ENCODE measurements at regions of chr3 and their contacts with region 1.

Region 1: DNA sequence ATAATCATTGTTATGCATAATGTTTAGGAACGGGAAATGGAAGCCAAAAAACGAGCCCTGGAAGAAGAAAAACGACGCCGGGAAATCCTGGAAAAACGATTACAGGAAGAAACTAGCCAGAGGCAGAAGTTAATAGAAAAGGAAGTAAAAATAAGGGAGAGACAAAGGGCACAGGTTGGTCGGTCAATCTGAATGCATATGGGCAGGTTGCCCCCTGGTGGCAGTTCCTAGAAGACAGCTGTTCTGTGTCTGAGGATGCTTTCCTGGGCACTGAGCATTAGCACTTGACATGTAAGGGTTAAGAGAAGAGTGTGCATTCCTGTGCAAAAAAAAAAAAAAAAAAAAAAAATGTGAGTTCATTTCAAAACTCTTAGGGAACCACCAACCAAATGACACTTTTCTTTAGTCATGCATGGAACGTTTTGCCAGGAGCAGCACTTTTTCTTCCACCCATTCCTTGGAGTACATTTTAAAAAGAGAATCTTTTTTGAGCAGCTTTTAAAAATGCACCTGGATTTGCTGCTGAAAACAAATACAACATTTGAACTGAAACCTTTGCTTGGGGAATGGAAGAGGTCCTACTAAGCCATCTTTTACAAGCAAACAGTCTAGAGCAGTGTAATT is 11.1 kb upstream of the ABHD10 start:
- DNase-seq: peak; percentile 55 to 85 (median 80)
- ATAC-seq: peak; percentile 95
- H3K4me3 ChIP-seq: no peak overlapping the region
- H3K4me3 Mint-ChIP-seq: no peak overlapping the region
- H3K27ac ChIP-seq: no peak overlapping the region
- H3K27ac Mint-ChIP-seq: no peak overlapping the region
- H3K4me1 ChIP-seq: no peaks in the 10 kb centered on the region
- H3K4me1 Mint-ChIP-seq: peaks cover 3% of the 10 kb centered on the region
- H3K27me3 ChIP-seq: no peaks in the 10 kb centered on the region
- H3K27me3 Mint-ChIP-seq: no peaks in the 10 kb centered on the region
- CTCF ChIP-seq: peak; percentile 92

Region 2: GRCh38 chr3:111577794-111578685 is 389.7 kb before region 1 on chr3:
- CTCF ChIA-PET with region 1: interaction called, 5 read pairs
- POLR2A ChIA-PET with region 1: no interaction called
- intact Hi-C with region 1: loop called in 1 of 2 experiments (anchors 10 kb)
- DNase-seq: peak in 2 of 9 experiments; percentile 51 to 68
- ATAC-seq: peak; percentile 90
- H3K4me3 ChIP-seq: no peak overlapping the region
- H3K4me3 Mint-ChIP-seq: no peak overlapping the region
- H3K27ac ChIP-seq: no peak overlapping the region
- H3K27ac Mint-ChIP-seq: peak overlapping the region; percentile 53
- H3K4me1 ChIP-seq: peaks cover 7% of the 10 kb centered on the region
- H3K4me1 Mint-ChIP-seq: peaks cover 75% of the 10 kb centered on the region
- H3K27me3 ChIP-seq: no peaks in the 10 kb centered on the region
- H3K27me3 Mint-ChIP-seq: no peaks in the 10 kb centered on the region
- CTCF ChIP-seq: no peak

Region 3: DNA sequence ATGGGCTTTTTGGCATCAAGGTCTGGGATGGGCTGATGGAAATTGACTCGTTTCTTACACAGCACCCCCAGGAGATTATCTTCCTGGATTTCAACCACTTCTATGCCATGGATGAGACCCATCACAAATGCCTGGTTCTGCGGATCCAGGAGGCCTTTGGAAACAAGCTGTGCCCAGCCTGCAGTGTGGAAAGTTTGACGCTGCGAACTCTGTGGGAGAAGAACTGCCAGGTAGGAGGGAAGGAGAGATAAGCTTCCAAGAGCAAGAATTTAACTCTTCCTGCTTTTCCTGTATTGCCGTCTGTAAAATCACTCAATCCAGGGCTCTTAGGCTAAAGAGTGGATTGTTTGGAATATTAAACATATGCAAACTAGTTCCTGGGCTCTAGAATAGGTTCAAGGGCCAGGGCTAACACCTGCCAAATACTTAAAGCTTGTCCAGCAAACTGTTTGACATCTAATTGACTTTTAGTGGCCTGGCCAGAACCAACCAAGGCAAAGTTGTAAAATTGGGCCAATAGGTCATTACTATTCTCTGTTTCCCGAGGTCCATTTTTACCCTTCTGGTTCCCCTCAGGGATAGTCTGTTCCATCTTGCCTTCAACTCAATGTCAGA is 259.5 kb before region 1 on chr3:
- CTCF ChIA-PET with region 1: interaction called, 13 read pairs
- POLR2A ChIA-PET with region 1: no interaction called
- intact Hi-C with region 1: no loop called
- DNase-seq: no peak
- ATAC-seq: no peak
- H3K4me3 ChIP-seq: no peak overlapping the region
- H3K4me3 Mint-ChIP-seq: no peak overlapping the region
- H3K27ac ChIP-seq: no peak overlapping the region
- H3K27ac Mint-ChIP-seq: no peak overlapping the region
- H3K4me1 ChIP-seq: no peaks in the 10 kb centered on the region
- H3K4me1 Mint-ChIP-seq: peaks cover 35% of the 10 kb centered on the region
- H3K27me3 ChIP-seq: no peaks in the 10 kb centered on the region
- H3K27me3 Mint-ChIP-seq: no peaks in the 10 kb centered on the region
- CTCF ChIP-seq: no peak

Region 4: GRCh38 chr3:111831840-111832239 is 135.9 kb before region 1 on chr3:
- CTCF ChIA-PET with region 1: no interaction called
- POLR2A ChIA-PET with region 1: no interaction called
- intact Hi-C with region 1: no loop called
- DNase-seq: peak in 4 of 9 experiments; percentile 1 to 52 (median 34)
- ATAC-seq: peak; percentile 40
- H3K4me3 ChIP-seq: no peak overlapping the region
- H3K4me3 Mint-ChIP-seq: no peak overlapping the region
- H3K27ac ChIP-seq: no peak overlapping the region
- H3K27ac Mint-ChIP-seq: peak overlapping the region; percentile 39
- H3K4me1 ChIP-seq: no peaks in the 10 kb centered on the region
- H3K4me1 Mint-ChIP-seq: peaks cover 13% of the 10 kb centered on the region
- H3K27me3 ChIP-seq: no peaks in the 10 kb centered on the region
- H3K27me3 Mint-ChIP-seq: no peaks in the 10 kb centered on the region
- CTCF ChIP-seq: no peak

Region 5: DNA sequence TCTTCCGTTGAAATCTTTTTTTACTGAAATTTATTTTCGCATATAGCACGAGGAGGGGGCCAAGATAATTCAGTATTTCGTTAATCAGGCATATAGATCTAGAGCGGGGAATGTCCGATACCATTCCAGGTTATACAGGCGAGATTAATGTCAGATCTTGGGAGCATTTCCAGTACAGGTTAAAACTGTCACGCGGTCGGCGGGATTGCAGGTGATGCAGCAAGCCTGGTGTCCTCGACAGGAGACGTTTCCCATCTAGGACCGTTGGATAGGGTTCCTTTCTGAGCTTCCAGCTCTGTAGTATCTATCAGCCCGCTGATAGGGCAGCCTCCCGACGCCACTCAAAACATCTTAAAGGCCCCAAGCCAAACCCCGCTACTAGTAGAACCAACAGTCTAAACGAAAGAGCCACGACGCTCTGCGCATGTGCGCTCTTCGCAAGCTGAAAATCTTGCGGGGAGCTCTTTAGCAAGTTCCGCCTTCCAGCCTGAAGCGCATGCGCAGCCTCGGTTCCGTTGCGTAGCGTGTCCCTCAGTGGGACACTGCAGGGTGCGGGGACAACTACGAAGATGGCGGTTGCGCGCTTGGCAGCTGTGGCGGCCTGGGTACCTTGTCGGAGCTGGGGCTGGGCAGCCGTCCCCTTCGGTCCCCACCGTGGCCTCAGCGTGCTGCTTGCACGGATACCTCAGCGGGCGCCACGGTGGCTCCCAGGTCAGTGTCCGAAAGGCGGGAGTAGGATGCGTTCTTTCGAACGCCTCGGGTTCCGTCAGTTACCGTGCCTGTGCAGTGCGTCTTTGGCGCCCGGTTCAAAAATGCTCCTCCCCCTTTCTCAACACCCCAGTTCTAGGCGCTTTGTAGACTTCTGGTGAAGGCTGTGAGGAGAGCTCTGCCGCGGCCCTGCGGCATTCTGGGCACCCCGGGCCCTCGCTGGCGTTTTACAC is 11.0 kb after region 1 on chr3 and contains the start of gene ABHD10:
- CTCF ChIA-PET with region 1: interaction called, 26 read pairs
- POLR2A ChIA-PET with region 1: interaction called, 12 read pairs
- intact Hi-C with region 1: no loop called
- DNase-seq: peak; percentile 90 to 99 (median 97)
- ATAC-seq: peak; percentile 94
- H3K4me3 ChIP-seq: peak within 1 kb of the TSS; percentile 89
- H3K4me3 Mint-ChIP-seq: peak within 1 kb of the TSS; percentile 94
- H3K27ac ChIP-seq: peak within 1 kb of the TSS; percentile 80 to 85
- H3K27ac Mint-ChIP-seq: peak within 1 kb of the TSS; percentile 95
- H3K4me1 ChIP-seq: peaks cover 31% of the 10 kb centered on the region
- H3K4me1 Mint-ChIP-seq: peaks cover 44% of the 10 kb centered on the region
- H3K27me3 ChIP-seq: no peaks in the 10 kb centered on the region
- H3K27me3 Mint-ChIP-seq: no peaks in the 10 kb centered on the region
- CTCF ChIP-seq: no peak
- total RNA-seq, gene ABHD10: 19.8 to 26.0 TPM

Region 6: DNA sequence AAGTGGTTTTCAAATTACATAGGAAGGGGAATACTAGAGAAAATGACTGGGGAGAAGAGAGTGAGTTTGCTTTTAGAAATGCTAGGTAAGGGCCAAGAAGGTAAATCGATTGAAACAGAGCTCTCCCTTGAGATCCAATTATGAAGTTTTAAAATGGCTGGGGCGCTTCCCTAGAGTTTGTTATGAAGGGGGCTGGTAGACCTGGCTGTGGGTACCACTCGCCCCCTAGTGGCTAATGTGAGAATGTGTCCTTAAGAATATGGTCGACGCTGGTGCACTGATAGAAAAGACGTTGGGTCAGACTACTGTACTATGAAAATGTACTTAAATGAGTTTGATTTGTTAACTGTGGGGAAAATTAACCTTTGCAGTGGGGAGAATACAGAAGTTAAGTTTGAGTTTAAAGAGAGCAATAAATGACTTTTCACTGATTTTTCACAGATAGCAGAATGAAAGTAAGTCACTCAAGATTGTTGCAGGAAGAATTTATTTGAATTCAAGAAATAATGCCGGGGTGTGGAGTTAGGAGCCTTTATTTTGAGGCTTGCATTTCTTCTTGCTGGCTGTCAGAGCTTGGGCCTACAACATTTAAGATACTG is 75.9 kb after region 1 on chr3:
- CTCF ChIA-PET with region 1: interaction called, 5 read pairs
- POLR2A ChIA-PET with region 1: no interaction called
- intact Hi-C with region 1: loop called in 1 of 2 experiments (anchors 5 kb)
- DNase-seq: peak; percentile 1 to 82 (median 47)
- ATAC-seq: peak; percentile 99
- H3K4me3 ChIP-seq: no peak overlapping the region
- H3K4me3 Mint-ChIP-seq: no peak overlapping the region
- H3K27ac ChIP-seq: no peak overlapping the region
- H3K27ac Mint-ChIP-seq: no peak overlapping the region
- H3K4me1 ChIP-seq: no peaks in the 10 kb centered on the region
- H3K4me1 Mint-ChIP-seq: no peaks in the 10 kb centered on the region
- H3K27me3 ChIP-seq: no peaks in the 10 kb centered on the region
- H3K27me3 Mint-ChIP-seq: peaks cover 2% of the 10 kb centered on the region
- CTCF ChIP-seq: peak; percentile 88